ENCODE measurements at regions of chr1 and their contacts with region 1.

Region 1: GRCh38 chr1:116485071-116485735 is 85.6 kb downstream of the CD58 start:
- DNase-seq: peak; percentile 94
- ATAC-seq: peak; percentile 93
- H3K4me3 Mint-ChIP-seq: no peak overlapping the region
- H3K27ac Mint-ChIP-seq: no peak overlapping the region
- H3K4me1 Mint-ChIP-seq: peaks cover 5% of the 10 kb centered on the region
- H3K27me3 Mint-ChIP-seq: no peaks in the 10 kb centered on the region

Region 2: GRCh38 chr1:116151739-116152576 is 333.2 kb before region 1 on chr1:
- CTCF ChIA-PET with region 1: interaction called, 60 read pairs
- POLR2A ChIA-PET with region 1: no interaction called
- intact Hi-C with region 1: loop called (anchors 1 kb)
- DNase-seq: peak; percentile 87
- ATAC-seq: peak; percentile 98
- H3K4me3 Mint-ChIP-seq: peak overlapping the region; percentile 49
- H3K27ac Mint-ChIP-seq: peak overlapping the region; percentile 70
- H3K4me1 Mint-ChIP-seq: peaks cover 18% of the 10 kb centered on the region
- H3K27me3 Mint-ChIP-seq: peaks cover 4% of the 10 kb centered on the region

Region 3: GRCh38 chr1:116232989-116233514 is 252.2 kb before region 1 on chr1:
- CTCF ChIA-PET with region 1: interaction called, 9 read pairs
- POLR2A ChIA-PET with region 1: no interaction called
- intact Hi-C with region 1: loop called (anchors 1 kb)
- DNase-seq: peak; percentile 14
- ATAC-seq: peak; percentile 58
- H3K4me3 Mint-ChIP-seq: no peak overlapping the region
- H3K27ac Mint-ChIP-seq: no peak overlapping the region
- H3K4me1 Mint-ChIP-seq: peaks cover 13% of the 10 kb centered on the region
- H3K27me3 Mint-ChIP-seq: no peaks in the 10 kb centered on the region

Region 4: GRCh38 chr1:116365857-116366256 is 119.3 kb before region 1 on chr1:
- CTCF ChIA-PET with region 1: interaction called, 10 read pairs
- POLR2A ChIA-PET with region 1: no interaction called
- intact Hi-C with region 1: no loop called
- DNase-seq: no peak
- ATAC-seq: no peak
- H3K4me3 Mint-ChIP-seq: no peak overlapping the region
- H3K27ac Mint-ChIP-seq: no peak overlapping the region
- H3K4me1 Mint-ChIP-seq: peaks cover 6% of the 10 kb centered on the region
- H3K27me3 Mint-ChIP-seq: no peaks in the 10 kb centered on the region

Region 5: DNA sequence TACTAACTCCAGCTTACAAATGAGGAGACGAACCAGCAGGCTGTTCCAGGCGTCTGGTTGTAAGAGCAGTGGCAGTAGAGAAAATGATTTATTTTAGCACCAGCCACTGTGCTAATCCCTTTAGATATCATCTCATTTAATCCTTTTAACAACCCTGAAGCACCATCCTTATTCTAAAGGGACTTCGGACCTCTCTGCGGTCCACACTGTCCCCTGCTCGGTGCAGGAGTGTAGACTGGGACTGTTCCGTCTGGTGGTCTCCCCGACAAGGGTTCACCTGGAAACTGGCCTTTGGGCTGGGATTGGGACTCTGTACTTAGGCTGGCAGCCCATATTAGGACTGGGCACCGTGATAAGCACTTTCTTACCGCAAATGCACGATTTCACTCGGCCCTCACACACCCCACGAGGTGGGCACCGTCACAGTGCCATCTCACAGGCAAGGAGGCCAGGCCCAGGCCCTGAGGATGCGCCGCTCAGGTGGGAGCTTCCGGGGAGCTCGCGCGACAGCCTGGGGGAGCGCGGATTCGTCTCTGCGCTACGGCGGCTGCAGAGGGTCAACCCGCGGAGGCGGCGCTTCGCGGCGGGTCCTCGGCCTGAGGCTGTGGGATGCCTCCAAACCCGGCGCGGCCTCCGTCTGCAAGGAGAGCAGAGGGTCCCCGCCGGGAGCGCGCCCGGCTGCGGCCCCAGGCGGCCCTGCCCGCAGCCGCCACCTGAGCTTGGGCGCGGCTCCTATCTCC is 66.9 kb before region 1 on chr1:
- CTCF ChIA-PET with region 1: interaction called, 13 read pairs
- POLR2A ChIA-PET with region 1: no interaction called
- intact Hi-C with region 1: no loop called
- DNase-seq: peak; percentile 92
- ATAC-seq: peak; percentile 88
- H3K4me3 Mint-ChIP-seq: peak overlapping the region; percentile 92
- H3K27ac Mint-ChIP-seq: peak overlapping the region; percentile 88
- H3K4me1 Mint-ChIP-seq: peaks cover 32% of the 10 kb centered on the region
- H3K27me3 Mint-ChIP-seq: no peaks in the 10 kb centered on the region

Region 6: GRCh38 chr1:116465845-116466685 is 19.1 kb before region 1 on chr1:
- CTCF ChIA-PET with region 1: interaction called, 13 read pairs
- POLR2A ChIA-PET with region 1: no interaction called
- intact Hi-C with region 1: no loop called
- DNase-seq: no peak
- ATAC-seq: no peak
- H3K4me3 Mint-ChIP-seq: no peak overlapping the region
- H3K27ac Mint-ChIP-seq: no peak overlapping the region
- H3K4me1 Mint-ChIP-seq: no peaks in the 10 kb centered on the region
- H3K27me3 Mint-ChIP-seq: peaks cover 3% of the 10 kb centered on the region

Region 7: DNA sequence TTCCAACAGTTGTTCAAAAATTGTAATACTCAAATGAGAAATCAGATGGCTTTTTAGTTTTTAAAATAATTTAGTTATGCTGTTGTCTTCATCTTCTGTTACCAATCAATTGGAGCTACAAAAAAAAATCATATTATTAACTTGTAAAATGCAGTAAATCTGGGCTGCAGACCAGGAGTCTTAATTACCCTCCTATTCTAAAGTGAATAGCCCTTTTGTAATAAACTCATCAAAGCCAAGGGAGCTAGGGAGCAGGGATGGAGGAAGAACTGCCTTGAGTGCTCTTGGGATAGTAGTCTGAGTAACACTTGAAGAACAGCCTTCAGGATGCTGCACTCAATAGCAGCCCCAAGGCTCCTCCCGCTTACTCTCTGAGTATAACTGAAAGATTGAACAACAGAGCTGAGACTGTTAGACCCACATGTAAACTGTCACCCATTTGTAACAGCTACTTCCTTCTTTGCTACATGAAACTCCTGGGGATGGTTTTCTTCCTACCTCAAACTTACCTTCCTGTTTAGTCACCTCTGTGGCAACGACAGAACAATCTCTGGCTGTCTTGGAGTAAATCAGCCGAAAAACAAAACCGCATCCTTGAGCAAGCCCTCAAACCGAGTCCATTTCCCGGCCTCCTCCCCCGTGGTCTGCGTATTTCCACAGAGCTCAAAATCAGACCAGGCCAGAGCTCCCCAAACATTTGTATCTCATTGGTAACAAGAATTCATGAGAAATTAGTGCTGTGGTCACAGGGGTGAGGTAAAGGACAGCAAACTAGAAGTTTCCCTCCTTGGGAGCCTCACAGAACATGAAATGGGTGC is 29.7 kb after region 1 on chr1:
- CTCF ChIA-PET with region 1: interaction called, 12 read pairs
- POLR2A ChIA-PET with region 1: no interaction called
- intact Hi-C with region 1: no loop called
- DNase-seq: peak; percentile 78
- ATAC-seq: peak; percentile 94
- H3K4me3 Mint-ChIP-seq: peak overlapping the region; percentile 39
- H3K27ac Mint-ChIP-seq: peak overlapping the region; percentile 85
- H3K4me1 Mint-ChIP-seq: peaks cover 56% of the 10 kb centered on the region
- H3K27me3 Mint-ChIP-seq: no peaks in the 10 kb centered on the region